SK-N-SH (cell line): ENCODE measurements at regions of chr2 and their contacts with region 1.

Region 1: GRCh38 chr2:20411361-20411894 is 35.4 kb upstream of the RHOB start:
- DNase-seq: peak; percentile 77
- H3K4me3 ChIP-seq: no peak overlapping the region
- H3K27ac ChIP-seq: no peak overlapping the region
- H3K4me1 ChIP-seq: no peaks in the 10 kb centered on the region
- H3K27me3 ChIP-seq: peaks cover 9% of the 10 kb centered on the region; the same call in 1 of the 2 replicates
- CTCF ChIP-seq: peak; percentile 87
- EP300 ChIP-seq: no peak
- RAD21 ChIP-seq: peak; percentile 70

Region 2: GRCh38 chr2:20398956-20399567 is 12.4 kb before region 1 on chr2:
- CTCF ChIA-PET with region 1: interaction called, 20 read pairs
- POLR2A ChIA-PET with region 1: no interaction called
- DNase-seq: no peak
- H3K4me3 ChIP-seq: no peak overlapping the region
- H3K27ac ChIP-seq: no peak overlapping the region
- H3K4me1 ChIP-seq: no peaks in the 10 kb centered on the region; a peak in 1 of 4 replicates
- H3K27me3 ChIP-seq: no peaks in the 10 kb centered on the region
- CTCF ChIP-seq: no peak
- EP300 ChIP-seq: no peak
- RAD21 ChIP-seq: no peak

Region 3: GRCh38 chr2:20424300-20425290 is 13.2 kb after region 1 on chr2:
- CTCF ChIA-PET with region 1: interaction called, 243 read pairs
- POLR2A ChIA-PET with region 1: no interaction called
- DNase-seq: peak; percentile 57
- H3K4me3 ChIP-seq: 0 out of 4 replicates have a peak overlapping the region, but pooled peaks of 1 of the 2 experiments have one; percentile 3
- H3K27ac ChIP-seq: peak overlapping the region; percentile 3 to 57; a peak in 3 of 4 replicates
- H3K4me1 ChIP-seq: peaks cover 25 to 32% of the 10 kb centered on the region in 2 experiments
- H3K27me3 ChIP-seq: no peaks in the 10 kb centered on the region
- CTCF ChIP-seq: no peak
- EP300 ChIP-seq: peak; percentile 35 to 78; a peak in 3 of 4 replicates
- RAD21 ChIP-seq: no peak

Region 4: GRCh38 chr2:20438334-20439192 is 27.1 kb after region 1 on chr2:
- CTCF ChIA-PET with region 1: interaction called, 243 read pairs
- POLR2A ChIA-PET with region 1: no interaction called
- DNase-seq: no peak
- H3K4me3 ChIP-seq: no peak overlapping the region
- H3K27ac ChIP-seq: peak overlapping the region in 1 of 2 experiments; percentile 6; a peak in 1 of 4 replicates
- H3K4me1 ChIP-seq: peaks cover 2 to 6% of the 10 kb centered on the region in 2 experiments; a peak in 2 of 4 replicates
- H3K27me3 ChIP-seq: no peaks in the 10 kb centered on the region; the same call in 1 of the 2 replicates
- CTCF ChIP-seq: no peak
- EP300 ChIP-seq: no peak
- RAD21 ChIP-seq: no peak

Region 5: GRCh38 chr2:20617892-20618467 is 206.6 kb after region 1 on chr2:
- CTCF ChIA-PET with region 1: interaction called, 12 read pairs
- POLR2A ChIA-PET with region 1: no interaction called
- DNase-seq: peak; percentile 82
- H3K4me3 ChIP-seq: no peak overlapping the region
- H3K27ac ChIP-seq: peak overlapping the region; percentile 67 to 90
- H3K4me1 ChIP-seq: peaks cover 18 to 42% of the 10 kb centered on the region in 2 experiments; a peak in 3 of 4 replicates
- H3K27me3 ChIP-seq: no peaks in the 10 kb centered on the region
- CTCF ChIP-seq: peak; percentile 56
- EP300 ChIP-seq: no peak; a peak in 1 of 4 replicates
- RAD21 ChIP-seq: peak; percentile 23; the same call in 1 of the 2 replicates

Region 6: GRCh38 chr2:20625491-20626391 is 214.3 kb after region 1 on chr2:
- CTCF ChIA-PET with region 1: interaction called, 15 read pairs
- POLR2A ChIA-PET with region 1: no interaction called
- DNase-seq: no peak
- H3K4me3 ChIP-seq: no peak overlapping the region
- H3K27ac ChIP-seq: 0 out of 4 replicates have a peak overlapping the region, but pooled peaks of 1 of the 2 experiments have one; percentile 43
- H3K4me1 ChIP-seq: peaks cover 0 to 37% of the 10 kb centered on the region in 2 experiments; a peak in 1 of 4 replicates
- H3K27me3 ChIP-seq: no peaks in the 10 kb centered on the region
- CTCF ChIP-seq: no peak
- EP300 ChIP-seq: no peak
- RAD21 ChIP-seq: no peak